H1 (cell line): ENCODE measurements at regions of chr12 and their contacts with region 1.

Region 1: DNA sequence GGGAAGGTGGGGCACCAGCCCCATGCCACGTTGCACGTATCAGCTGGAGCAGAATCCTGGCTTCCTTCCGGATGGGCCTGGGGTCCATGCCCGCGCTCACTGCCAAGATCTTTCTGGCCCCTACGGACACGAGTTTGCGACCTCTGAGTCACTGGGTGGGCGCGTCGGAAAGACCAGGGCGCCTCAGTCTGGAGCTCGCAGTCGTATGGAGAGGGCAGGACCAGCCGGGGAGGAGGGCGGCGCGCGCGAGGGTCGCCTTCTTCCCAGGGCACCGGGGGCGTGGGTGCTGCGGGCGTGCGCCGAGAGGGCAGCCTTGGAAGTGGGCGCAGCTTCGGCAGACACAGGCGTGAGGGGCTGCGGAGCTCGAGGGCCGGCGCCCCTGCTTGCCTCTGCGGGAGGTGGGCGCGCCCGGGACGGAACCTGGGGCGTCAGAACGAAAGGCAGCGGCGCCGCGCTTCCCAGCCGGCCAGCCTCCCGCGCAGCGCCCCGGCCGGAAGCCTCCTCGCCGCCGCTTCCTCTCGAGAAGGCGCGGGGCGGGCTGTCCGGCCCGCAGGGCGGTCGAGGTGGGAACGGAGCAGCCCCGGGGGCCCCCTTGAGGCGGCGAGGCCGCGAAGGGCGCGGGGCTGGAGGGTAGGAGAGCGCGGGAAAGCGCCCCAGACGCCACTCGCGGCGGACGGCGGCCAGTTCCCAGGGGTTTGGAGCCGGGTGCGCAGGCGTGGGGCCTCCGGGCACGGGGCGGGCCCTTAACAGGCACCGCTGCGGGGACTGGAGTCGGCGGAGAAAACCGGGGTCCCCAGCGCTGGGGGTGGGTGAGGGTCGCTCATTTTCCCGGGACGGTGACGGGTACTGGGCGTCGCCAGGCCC is at the start of gene ARL6IP4:
- DNase-seq: peak in 1 of 2 experiments; percentile 78
- H3K4me3 ChIP-seq: peak within 1 kb of the TSS; percentile 77 to 92 (median 85)
- H3K27ac ChIP-seq: peak within 1 kb of the TSS; percentile 47
- H3K4me1 ChIP-seq: peaks cover 0 to 20% (median 11%) of the 10 kb centered on the region in 4 experiments; a peak in 6 of 7 replicates
- H3K27me3 ChIP-seq: no peaks in the 10 kb centered on the region
- CTCF ChIP-seq: no peak
- EP300 ChIP-seq: no peak
- POLR2A ChIP-seq: peak in 1 of 2 experiments; percentile 50; a peak in 1 of 3 replicates
- RAD21 ChIP-seq: 0 out of 4 replicates have a peak, but pooled peaks of 1 of the 2 experiments have one; percentile 3
- total RNA-seq, gene ARL6IP4: 109 and 115 TPM in 2 replicates

Region 2: DNA sequence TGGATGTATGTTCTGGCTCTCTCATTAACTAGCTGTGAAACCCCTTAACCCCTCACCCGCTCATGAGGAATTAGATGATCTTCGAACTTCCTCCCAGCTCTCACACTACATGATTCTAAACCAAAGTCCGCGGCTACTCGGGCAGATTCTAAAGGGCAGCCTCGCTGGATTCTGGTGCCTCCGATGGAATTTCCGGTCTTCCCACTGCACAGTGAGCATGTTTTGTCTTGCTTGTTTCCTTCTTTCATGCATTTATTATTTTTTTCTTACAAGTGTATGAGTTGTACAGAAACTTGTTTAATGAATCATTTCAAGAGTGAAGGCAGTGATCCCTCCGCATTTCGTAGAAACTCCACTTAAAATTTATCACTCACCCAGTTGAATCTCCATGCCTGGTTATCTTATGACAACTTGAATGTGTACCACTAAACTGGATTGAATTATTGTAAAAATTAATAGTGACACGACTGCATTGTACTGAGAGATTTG is 259.3 kb before region 1 on chr12:
- CTCF ChIA-PET with region 1: no interaction called
- POLR2A ChIA-PET with region 1: no interaction called
- DNase-seq: no peak
- H3K4me3 ChIP-seq: no peak overlapping the region
- H3K27ac ChIP-seq: no peak overlapping the region
- H3K4me1 ChIP-seq: no peaks in the 10 kb centered on the region
- H3K27me3 ChIP-seq: no peaks in the 10 kb centered on the region; a peak in 1 of 7 replicates
- CTCF ChIP-seq: no peak
- EP300 ChIP-seq: no peak
- POLR2A ChIP-seq: no peak
- RAD21 ChIP-seq: no peak

Region 3: GRCh38 chr12:122752464-122753318 is 227.7 kb before region 1 on chr12 and contains the start of gene DENR:
- CTCF ChIA-PET with region 1: no interaction called
- POLR2A ChIA-PET with region 1: no interaction called
- DNase-seq: peak; percentile 96 to 100
- H3K4me3 ChIP-seq: peak within 1 kb of the TSS; percentile 79 to 98 (median 88)
- H3K27ac ChIP-seq: peak within 1 kb of the TSS; percentile 83
- H3K4me1 ChIP-seq: peaks cover 2 to 9% (median 6%) of the 10 kb centered on the region in 4 experiments; a peak in 5 of 7 replicates
- H3K27me3 ChIP-seq: no peaks in the 10 kb centered on the region
- CTCF ChIP-seq: peak; percentile 87 to 95 (median 95)
- EP300 ChIP-seq: 0 out of 3 replicates have a peak, but pooled peaks of 1 of the 2 experiments have one; percentile 6
- POLR2A ChIP-seq: peak; percentile 79 to 96
- RAD21 ChIP-seq: peak; percentile 93 to 96
- total RNA-seq, gene DENR: 78.1 and 84.0 TPM in 2 replicates

Region 4: DNA sequence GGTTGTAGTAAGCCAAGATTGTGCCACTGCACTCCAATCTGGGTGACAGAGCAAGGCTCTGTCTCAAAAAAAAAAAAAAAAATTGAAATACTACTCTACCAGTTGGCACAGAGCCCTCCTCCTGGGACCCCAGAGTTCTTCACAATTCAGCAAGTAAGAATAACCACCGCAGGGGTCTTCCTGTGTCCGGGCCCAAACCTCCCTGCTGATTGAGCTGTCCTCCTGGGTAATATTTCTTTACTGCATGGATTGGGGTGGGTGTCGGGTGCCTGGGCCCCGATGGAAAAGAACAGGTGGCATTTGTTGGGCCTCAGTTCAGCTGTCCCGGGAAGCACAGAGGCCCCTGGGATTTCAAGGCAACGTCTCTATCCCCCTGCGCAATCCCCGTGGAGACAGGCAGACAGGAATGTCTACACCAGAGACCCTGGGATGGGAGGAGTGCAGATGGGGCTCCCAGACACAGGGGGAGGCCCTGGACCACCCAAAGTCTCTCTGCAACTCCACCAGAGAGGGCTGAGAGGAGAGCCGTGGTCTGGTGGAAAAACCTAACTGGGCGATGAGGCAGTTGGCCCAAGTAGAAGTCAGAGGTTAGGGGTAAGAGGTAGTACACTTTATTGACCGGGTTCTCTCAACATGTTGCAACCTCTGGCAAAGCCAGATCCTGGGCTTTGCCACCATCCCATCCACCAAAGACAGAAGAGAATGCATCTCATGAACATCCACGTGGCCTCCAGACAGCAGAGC is 51.8 kb before region 1 on chr12:
- CTCF ChIA-PET with region 1: no interaction called
- POLR2A ChIA-PET with region 1: no interaction called
- DNase-seq: no peak
- H3K4me3 ChIP-seq: no peak overlapping the region
- H3K27ac ChIP-seq: no peak overlapping the region
- H3K4me1 ChIP-seq: no peaks in the 10 kb centered on the region; a peak in 1 of 7 replicates
- H3K27me3 ChIP-seq: no peaks in the 10 kb centered on the region
- CTCF ChIP-seq: no peak
- EP300 ChIP-seq: no peak
- POLR2A ChIP-seq: no peak
- RAD21 ChIP-seq: no peak

Region 5: DNA sequence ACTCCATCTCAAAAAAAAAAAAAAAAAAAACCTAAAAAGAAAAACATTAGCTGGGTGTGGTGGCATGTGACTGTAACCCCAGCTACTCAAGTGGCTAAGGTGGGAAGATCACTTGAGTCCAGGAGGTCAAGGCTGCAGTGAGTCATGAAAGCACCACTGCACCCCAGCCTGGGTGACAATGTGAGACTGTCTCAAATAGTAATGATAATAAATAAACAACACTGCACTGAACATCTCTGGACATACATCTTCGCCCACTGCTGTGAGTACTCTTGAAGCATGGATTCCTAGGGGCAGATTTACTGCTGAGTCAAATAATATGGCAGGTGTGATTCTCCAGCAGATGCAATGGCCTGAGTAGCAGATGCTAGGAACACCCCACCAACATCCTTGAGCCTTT is 37.8 kb before region 1 on chr12:
- CTCF ChIA-PET with region 1: no interaction called
- POLR2A ChIA-PET with region 1: no interaction called
- DNase-seq: no peak
- H3K4me3 ChIP-seq: no peak overlapping the region
- H3K27ac ChIP-seq: no peak overlapping the region
- H3K4me1 ChIP-seq: no peaks in the 10 kb centered on the region
- H3K27me3 ChIP-seq: no peaks in the 10 kb centered on the region
- CTCF ChIP-seq: no peak
- EP300 ChIP-seq: no peak
- POLR2A ChIP-seq: no peak
- RAD21 ChIP-seq: no peak

Region 6: DNA sequence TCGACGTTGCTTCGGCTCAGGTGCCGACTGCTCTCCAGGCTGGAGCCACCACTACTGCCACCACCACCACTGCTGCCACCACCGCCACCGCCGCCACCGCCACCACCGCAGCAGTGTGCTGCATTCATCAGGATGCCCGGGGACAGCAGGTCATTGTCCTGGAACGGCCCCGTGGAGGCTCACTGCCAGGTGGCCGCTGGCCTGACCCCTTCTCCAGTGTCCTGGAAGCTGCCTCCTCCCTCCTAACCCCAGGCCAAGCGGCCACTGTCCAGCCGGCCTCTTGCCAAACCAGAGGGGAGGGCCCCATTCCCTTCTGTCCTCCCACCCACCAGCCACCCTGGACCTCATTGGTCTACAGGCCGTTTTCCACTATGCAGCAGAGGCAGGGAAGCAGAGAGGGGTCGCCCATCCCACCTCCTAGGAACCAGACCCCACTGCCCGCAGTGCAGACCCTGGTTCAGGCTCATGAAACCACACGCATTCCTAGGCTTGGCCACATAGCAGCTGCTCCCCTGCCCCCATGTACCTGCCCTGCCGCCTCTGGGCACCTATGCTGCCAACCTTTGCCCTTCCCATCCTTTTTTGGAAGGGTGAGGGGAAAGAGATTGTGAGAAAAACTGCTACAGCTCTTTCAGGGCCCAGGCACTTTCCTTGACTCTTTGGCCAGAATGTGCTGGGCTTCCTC is 15.2 kb after region 1 on chr12:
- CTCF ChIA-PET with region 1: interaction called, 10 read pairs
- POLR2A ChIA-PET with region 1: interaction called, 15 read pairs
- DNase-seq: no peak
- H3K4me3 ChIP-seq: no peak overlapping the region
- H3K27ac ChIP-seq: no peak overlapping the region
- H3K4me1 ChIP-seq: no peaks in the 10 kb centered on the region; a peak in 2 of 7 replicates
- H3K27me3 ChIP-seq: no peaks in the 10 kb centered on the region
- CTCF ChIP-seq: no peak
- EP300 ChIP-seq: no peak
- POLR2A ChIP-seq: no peak
- RAD21 ChIP-seq: no peak